ENCODE measurements at regions of chr6 and their contacts with region 1.

Region 1: GRCh38 chr6:134161036-134161435 is 108.6 kb upstream of the SLC2A12 start:
- DNase-seq: no peak
- ATAC-seq: no peak
- H3K4me3 Mint-ChIP-seq: no peak overlapping the region
- H3K27ac Mint-ChIP-seq: no peak overlapping the region
- H3K4me1 Mint-ChIP-seq: no peaks in the 10 kb centered on the region
- H3K27me3 Mint-ChIP-seq: no peaks in the 10 kb centered on the region

Region 2: GRCh38 chr6:134822920-134823709 is 662.1 kb after region 1 on chr6:
- CTCF ChIA-PET with region 1: interaction called, 44 read pairs
- POLR2A ChIA-PET with region 1: interaction called, 3 read pairs
- intact Hi-C with region 1: loop called (anchors 1 kb)
- DNase-seq: peak; percentile 36
- ATAC-seq: peak; percentile 86
- H3K4me3 Mint-ChIP-seq: no peak overlapping the region
- H3K27ac Mint-ChIP-seq: no peak overlapping the region
- H3K4me1 Mint-ChIP-seq: peaks cover 4% of the 10 kb centered on the region
- H3K27me3 Mint-ChIP-seq: peaks cover 2% of the 10 kb centered on the region

Measured in activated CD4-positive, alpha-beta T cell treated with anti-CD3 and anti-CD28 coated beads for 36 hours (primary cell).